PC-9 (cell line): ENCODE measurements at regions of chr16 and their contacts with region 1.

Region 1: DNA sequence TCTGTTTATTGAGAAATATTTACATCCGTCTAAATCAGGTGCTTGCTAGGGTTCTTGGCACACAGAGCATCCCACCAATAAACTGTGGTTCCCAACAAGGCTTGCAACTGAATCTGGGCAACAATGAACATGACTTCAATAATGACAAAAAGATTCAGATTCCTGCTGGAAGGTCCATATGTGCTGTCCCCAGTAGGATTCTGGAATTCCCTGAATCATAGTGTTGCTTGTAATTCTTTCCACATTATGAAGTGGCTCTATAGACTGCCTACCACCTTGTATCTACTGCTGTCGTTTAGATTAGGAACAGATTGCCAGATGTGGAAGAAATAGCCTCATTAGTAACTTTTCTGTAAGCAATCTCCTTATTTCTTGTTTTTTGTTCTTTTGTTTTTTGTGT is 265.9 kb downstream of the WWOX start:
- DNase-seq: no peak
- H3K4me3 ChIP-seq: no peak overlapping the region
- H3K27ac ChIP-seq: no peak overlapping the region
- H3K4me1 ChIP-seq: no peaks in the 10 kb centered on the region
- H3K27me3 ChIP-seq: no peaks in the 10 kb centered on the region
- CTCF ChIP-seq: no peak

Region 2: DNA sequence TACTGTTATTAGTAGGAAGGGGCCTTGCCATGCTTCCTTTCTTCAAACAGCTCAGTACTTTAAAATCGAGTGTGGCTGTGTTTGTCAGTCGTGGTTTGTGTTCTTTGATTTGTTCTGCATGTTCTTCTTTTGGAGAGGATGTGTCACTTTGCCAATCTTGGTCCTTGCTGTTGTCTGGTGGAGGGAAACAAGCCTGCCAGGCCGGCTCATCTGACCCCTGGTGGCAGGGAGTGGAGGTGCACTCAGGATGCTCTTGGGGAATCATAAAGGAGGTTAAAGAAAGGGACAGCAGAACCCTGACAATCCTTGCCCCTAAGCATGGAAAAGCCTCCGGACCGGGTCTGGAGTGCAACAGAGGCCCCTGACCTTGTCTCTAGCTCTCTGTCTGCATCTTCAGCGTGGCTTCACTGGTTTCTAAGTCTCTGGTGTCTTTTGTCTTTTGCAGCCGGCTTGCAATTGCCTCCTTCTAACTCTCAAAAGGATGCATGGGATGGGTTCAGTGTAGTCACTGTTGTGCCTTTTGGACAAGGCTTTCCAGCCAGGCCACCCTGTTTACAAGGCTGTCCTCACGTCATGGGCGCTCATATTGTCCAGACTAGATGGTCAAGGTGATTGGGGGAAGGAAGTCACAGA is 130.1 kb before region 1 on chr16:
- CTCF ChIA-PET with region 1: no interaction called
- POLR2A ChIA-PET with region 1: no interaction called
- intact Hi-C with region 1: no loop called
- DNase-seq: peak; percentile 57 to 63
- H3K4me3 ChIP-seq: no peak overlapping the region
- H3K27ac ChIP-seq: no peak overlapping the region
- H3K4me1 ChIP-seq: peaks cover 11% of the 10 kb centered on the region
- H3K27me3 ChIP-seq: no peaks in the 10 kb centered on the region
- CTCF ChIP-seq: peak; percentile 96

Region 3: DNA sequence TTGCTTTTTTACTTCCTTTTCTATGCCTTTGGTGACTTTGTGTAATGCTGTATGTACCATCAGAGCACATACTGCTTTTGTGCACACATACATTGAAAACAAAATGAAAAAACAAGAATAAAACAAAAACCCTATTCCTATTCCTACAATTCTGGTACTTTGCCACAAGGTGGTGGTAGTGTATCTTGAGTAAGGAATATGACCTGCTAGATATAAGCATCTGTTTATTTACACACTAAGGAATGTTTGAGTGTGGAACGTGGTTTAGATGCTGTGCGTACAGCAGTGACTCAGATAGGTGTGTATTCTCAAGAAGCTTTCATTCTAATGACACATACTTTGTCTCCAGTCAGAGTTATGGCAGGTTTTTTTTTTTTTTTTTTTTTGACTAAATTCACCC is 340.3 kb after region 1 on chr16:
- CTCF ChIA-PET with region 1: no interaction called
- POLR2A ChIA-PET with region 1: no interaction called
- intact Hi-C with region 1: no loop called
- DNase-seq: peak in 1 of 2 experiments; percentile 67
- H3K4me3 ChIP-seq: no peak overlapping the region
- H3K27ac ChIP-seq: no peak overlapping the region
- H3K4me1 ChIP-seq: no peaks in the 10 kb centered on the region
- H3K27me3 ChIP-seq: no peaks in the 10 kb centered on the region
- CTCF ChIP-seq: peak; percentile 52

Region 4: DNA sequence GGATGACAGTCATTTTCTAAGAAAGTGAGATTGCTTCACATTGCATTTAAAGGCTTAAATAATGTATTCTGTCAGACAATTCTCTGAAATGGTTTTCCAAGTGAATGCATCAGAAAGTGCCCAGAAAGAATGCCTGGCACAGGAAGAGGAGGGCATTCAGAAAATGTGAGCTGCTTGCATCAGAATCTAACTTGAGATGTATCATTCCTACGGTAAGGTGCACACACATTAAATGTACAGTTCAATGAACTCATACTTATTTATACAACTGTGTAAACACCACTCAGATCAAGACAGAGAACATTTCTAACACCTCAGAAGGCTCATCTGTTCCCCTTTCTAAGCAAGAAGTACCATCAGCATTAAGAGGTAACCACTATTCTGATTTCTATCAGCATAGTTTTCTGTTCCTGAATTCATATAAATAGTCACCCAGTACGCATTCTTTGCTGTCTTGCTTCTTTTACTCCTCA is 597.1 kb after region 1 on chr16:
- CTCF ChIA-PET with region 1: interaction called, 12 read pairs
- POLR2A ChIA-PET with region 1: no interaction called
- intact Hi-C with region 1: no loop called
- DNase-seq: peak in 1 of 2 experiments; percentile 37
- H3K4me3 ChIP-seq: no peak overlapping the region
- H3K27ac ChIP-seq: peak overlapping the region; percentile 29; the same call in 1 of the 2 replicates
- H3K4me1 ChIP-seq: 0 out of 2 replicates have a peak, but pooled peaks cover 12% of the 10 kb centered on the region
- H3K27me3 ChIP-seq: no peaks in the 10 kb centered on the region
- CTCF ChIP-seq: no peak